ENCODE measurements at regions of chr3 and their contacts with region 1.

Region 1: GRCh38 chr3:7134234-7134633 is 273.3 kb downstream of the GRM7 start:
- DNase-seq: no peak
- ATAC-seq: no peak
- H3K4me3 ChIP-seq: no peak overlapping the region
- H3K4me3 Mint-ChIP-seq: no peak overlapping the region
- H3K27ac ChIP-seq: no peak overlapping the region
- H3K27ac Mint-ChIP-seq: no peak overlapping the region
- H3K4me1 ChIP-seq: no peaks in the 10 kb centered on the region
- H3K4me1 Mint-ChIP-seq: no peaks in the 10 kb centered on the region
- H3K27me3 ChIP-seq: no peaks in the 10 kb centered on the region
- H3K27me3 Mint-ChIP-seq: no peaks in the 10 kb centered on the region
- CTCF ChIP-seq: no peak

Region 2: GRCh38 chr3:7158516-7158915 is 24.3 kb after region 1 on chr3:
- CTCF ChIA-PET with region 1: no interaction called
- POLR2A ChIA-PET with region 1: no interaction called
- intact Hi-C with region 1: loop called in 1 of 2 experiments (anchors 1 kb)
- DNase-seq: no peak
- ATAC-seq: no peak
- H3K4me3 ChIP-seq: no peak overlapping the region
- H3K4me3 Mint-ChIP-seq: no peak overlapping the region
- H3K27ac ChIP-seq: no peak overlapping the region
- H3K27ac Mint-ChIP-seq: no peak overlapping the region
- H3K4me1 ChIP-seq: no peaks in the 10 kb centered on the region
- H3K4me1 Mint-ChIP-seq: no peaks in the 10 kb centered on the region
- H3K27me3 ChIP-seq: no peaks in the 10 kb centered on the region
- H3K27me3 Mint-ChIP-seq: no peaks in the 10 kb centered on the region
- CTCF ChIP-seq: no peak

Region 3: DNA sequence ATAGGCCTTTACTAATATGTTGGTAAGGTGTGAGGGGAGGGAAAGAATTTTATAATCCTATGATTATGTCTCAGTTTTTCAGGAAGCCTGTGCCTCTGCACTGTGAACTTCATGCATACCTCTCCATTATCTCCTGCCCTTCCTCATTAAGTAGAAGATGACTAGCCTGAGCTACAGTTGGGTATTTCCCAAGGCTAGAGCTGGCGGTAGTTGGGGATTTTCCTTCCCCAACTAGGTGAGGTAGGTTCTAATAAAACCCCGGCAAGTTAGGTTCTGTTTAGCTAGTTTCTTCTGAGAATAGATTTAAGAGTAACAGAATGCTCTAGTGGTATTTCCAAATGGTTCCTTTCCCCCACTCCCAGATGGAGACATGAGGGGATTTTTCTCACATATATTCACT is 141.2 kb after region 1 on chr3:
- CTCF ChIA-PET with region 1: no interaction called
- POLR2A ChIA-PET with region 1: no interaction called
- intact Hi-C with region 1: no loop called
- DNase-seq: no peak
- ATAC-seq: no peak
- H3K4me3 ChIP-seq: no peak overlapping the region
- H3K4me3 Mint-ChIP-seq: no peak overlapping the region
- H3K27ac ChIP-seq: no peak overlapping the region
- H3K27ac Mint-ChIP-seq: no peak overlapping the region
- H3K4me1 ChIP-seq: no peaks in the 10 kb centered on the region
- H3K4me1 Mint-ChIP-seq: no peaks in the 10 kb centered on the region
- H3K27me3 ChIP-seq: no peaks in the 10 kb centered on the region
- H3K27me3 Mint-ChIP-seq: no peaks in the 10 kb centered on the region
- CTCF ChIP-seq: no peak